ENCODE measurements at regions of chr18 and their contacts with region 1.

Region 1: GRCh38 chr18:2839208-2839607 is 7.6 kb upstream of the EMILIN2 start:
- DNase-seq: no peak
- ATAC-seq: no peak
- H3K4me3 ChIP-seq: no peak overlapping the region
- H3K27ac ChIP-seq: no peak overlapping the region
- H3K4me1 ChIP-seq: peaks cover 0 to 6% (median 0%) of the 10 kb centered on the region in 9 donors
- H3K27me3 ChIP-seq: no peaks in the 10 kb centered on the region
- CTCF ChIP-seq: no peak

Region 2: GRCh38 chr18:2824865-2825264 is 14.3 kb before region 1 on chr18:
- intact Hi-C with region 1: loop called in 1 of 10 experiments (anchors 1 kb)
- DNase-seq: no peak
- ATAC-seq: no peak
- H3K4me3 ChIP-seq: no peak overlapping the region
- H3K27ac ChIP-seq: no peak overlapping the region
- H3K4me1 ChIP-seq: peaks cover 0 to 11% (median 8%) of the 10 kb centered on the region in 9 donors
- H3K27me3 ChIP-seq: no peaks in the 10 kb centered on the region
- CTCF ChIP-seq: no peak

Region 3: GRCh38 chr18:2874765-2875164 is 35.6 kb after region 1 on chr18:
- intact Hi-C with region 1: no loop called
- DNase-seq: no peak
- ATAC-seq: peak in 7 of 8 donors; percentile 19 to 76 (median 49)
- H3K4me3 ChIP-seq: no peak overlapping the region
- H3K27ac ChIP-seq: peak overlapping the region in 9 of 10 donors; percentile 36 to 79 (median 61)
- H3K4me1 ChIP-seq: peaks cover 0 to 27% (median 17%) of the 10 kb centered on the region in 9 donors
- H3K27me3 ChIP-seq: peaks cover 0 to 3% (median 0%) of the 10 kb centered on the region in 7 donors
- CTCF ChIP-seq: no peak

Region 4: GRCh38 chr18:3281456-3282400 is 442.5 kb after region 1 on chr18:
- intact Hi-C with region 1: no loop called
- DNase-seq: peak in 1 of 2 donors; percentile 33
- ATAC-seq: peak; percentile 78 to 89 (median 86)
- H3K4me3 ChIP-seq: no peak overlapping the region
- H3K27ac ChIP-seq: peak overlapping the region in 6 of 10 donors; percentile 1 to 56 (median 32)
- H3K4me1 ChIP-seq: peaks cover 0 to 27% (median 14%) of the 10 kb centered on the region in 9 donors
- H3K27me3 ChIP-seq: no peaks in the 10 kb centered on the region
- CTCF ChIP-seq: peak; percentile 39 to 87 (median 73)